ENCODE measurements at regions of chrX and their contacts with region 1.

Region 1: DNA sequence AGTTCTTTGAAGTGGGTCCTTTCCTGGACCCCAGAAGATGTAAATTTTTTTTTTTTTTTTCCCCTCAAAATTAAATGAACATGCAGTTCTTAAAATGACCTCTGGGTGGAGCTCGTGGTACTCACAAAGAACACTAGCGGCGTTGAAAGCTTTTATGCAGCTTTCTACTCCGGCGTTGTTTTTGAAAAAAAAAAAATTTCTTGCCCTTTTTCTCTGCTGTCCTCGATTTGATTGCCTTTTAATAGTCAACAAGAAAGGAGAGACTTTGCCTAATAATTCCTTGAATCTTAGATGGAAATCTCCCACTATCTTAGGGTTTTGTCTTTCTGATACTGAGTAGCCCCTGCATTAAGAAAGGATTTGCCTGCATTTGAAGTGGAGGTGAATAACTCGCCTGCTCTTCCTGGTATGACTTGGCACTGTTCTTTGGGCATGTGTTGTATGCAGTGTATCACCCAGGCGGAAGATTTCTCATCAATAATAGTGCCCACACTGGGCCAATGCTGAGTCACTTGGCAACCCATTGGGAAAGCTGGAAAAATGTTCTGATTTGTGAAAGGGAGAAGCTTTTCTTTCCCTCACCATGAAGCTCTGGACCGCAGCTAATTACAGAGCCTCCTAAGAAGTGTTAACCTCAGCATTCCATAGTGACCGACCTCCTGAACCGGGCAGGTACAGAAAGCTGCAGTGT is 104.0 kb downstream of the PHEX start:
- DNase-seq: peak; percentile 87
- H3K4me3 Mint-ChIP-seq: peak overlapping the region; percentile 49
- H3K27ac Mint-ChIP-seq: peak overlapping the region; percentile 91
- H3K4me1 Mint-ChIP-seq: peaks cover 31% of the 10 kb centered on the region
- H3K27me3 Mint-ChIP-seq: no peaks in the 10 kb centered on the region
- CTCF ChIP-seq: peak; percentile 78

Region 2: GRCh38 chrX:22122510-22122909 is 13.6 kb before region 1 on chrX:
- CTCF ChIA-PET with region 1: interaction called, 10 read pairs
- POLR2A ChIA-PET with region 1: interaction called, 23 read pairs
- intact Hi-C with region 1: no loop called
- DNase-seq: peak; percentile 97
- H3K4me3 Mint-ChIP-seq: no peak overlapping the region
- H3K27ac Mint-ChIP-seq: peak overlapping the region; percentile 60
- H3K4me1 Mint-ChIP-seq: peaks cover 18% of the 10 kb centered on the region
- H3K27me3 Mint-ChIP-seq: no peaks in the 10 kb centered on the region
- CTCF ChIP-seq: no peak

Region 3: DNA sequence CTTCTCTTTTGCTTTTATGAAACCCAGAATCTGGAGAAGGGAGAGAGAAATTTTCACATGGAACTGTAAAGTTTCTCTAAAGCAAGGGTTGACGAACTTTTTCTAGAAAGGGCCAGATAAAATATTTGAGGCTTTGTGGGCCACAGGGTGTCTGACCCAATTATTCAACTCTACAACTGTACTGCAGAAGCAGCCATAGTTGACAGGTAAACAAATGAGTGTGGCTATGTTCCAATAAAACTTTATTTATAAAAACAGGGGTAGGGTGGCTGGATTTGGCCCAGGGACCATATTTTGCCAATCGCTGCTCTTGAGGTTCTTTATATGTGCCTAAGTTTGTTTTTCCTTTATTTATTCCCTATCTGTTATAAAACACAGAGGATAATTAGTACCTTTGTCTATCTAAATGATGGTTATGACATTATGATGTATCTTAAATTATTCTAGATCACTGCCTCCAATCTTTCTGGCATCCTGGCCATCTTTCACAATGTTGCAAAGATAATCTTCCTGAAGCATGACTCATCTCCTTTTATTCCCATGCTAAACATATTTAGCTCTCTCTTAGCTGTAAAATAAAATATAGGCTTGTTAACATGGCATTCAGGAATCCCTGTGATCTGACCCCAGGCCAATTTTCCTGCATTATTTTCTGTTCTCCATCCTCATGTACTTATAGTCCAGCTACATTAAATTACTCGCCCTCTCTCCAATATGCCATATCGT is 29.8 kb after region 1 on chrX:
- CTCF ChIA-PET with region 1: interaction called, 13 read pairs
- POLR2A ChIA-PET with region 1: no interaction called
- intact Hi-C with region 1: no loop called
- DNase-seq: peak; percentile 54
- H3K4me3 Mint-ChIP-seq: no peak overlapping the region
- H3K27ac Mint-ChIP-seq: peak overlapping the region; percentile 46
- H3K4me1 Mint-ChIP-seq: peaks cover 16% of the 10 kb centered on the region
- H3K27me3 Mint-ChIP-seq: peaks cover 79% of the 10 kb centered on the region
- CTCF ChIP-seq: no peak

Region 4: DNA sequence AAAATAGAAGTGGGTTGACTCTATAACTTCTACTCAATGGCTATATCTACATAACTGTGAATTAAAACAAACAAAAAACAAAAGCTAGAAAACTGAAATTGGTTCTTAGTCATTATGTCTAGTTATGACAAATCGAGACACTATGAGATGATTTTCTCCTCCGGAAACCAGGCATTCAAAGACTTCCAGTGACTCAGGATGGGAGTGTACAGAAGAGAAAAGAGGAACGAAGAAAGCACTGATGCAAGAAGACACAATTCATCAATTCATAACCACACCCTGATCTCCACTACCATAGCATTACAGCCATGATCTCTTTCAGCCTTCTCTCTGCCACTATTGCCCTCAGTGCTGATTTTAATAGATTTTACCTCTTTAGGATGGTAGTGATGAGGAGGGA is 390.2 kb after region 1 on chrX:
- CTCF ChIA-PET with region 1: interaction called, 4 read pairs
- POLR2A ChIA-PET with region 1: no interaction called
- intact Hi-C with region 1: loop called (anchors 10 kb)
- DNase-seq: peak; percentile 76
- H3K4me3 Mint-ChIP-seq: no peak overlapping the region
- H3K27ac Mint-ChIP-seq: peak overlapping the region; percentile 63
- H3K4me1 Mint-ChIP-seq: peaks cover 8% of the 10 kb centered on the region
- H3K27me3 Mint-ChIP-seq: peaks cover 25% of the 10 kb centered on the region
- CTCF ChIP-seq: no peak

Region 5: DNA sequence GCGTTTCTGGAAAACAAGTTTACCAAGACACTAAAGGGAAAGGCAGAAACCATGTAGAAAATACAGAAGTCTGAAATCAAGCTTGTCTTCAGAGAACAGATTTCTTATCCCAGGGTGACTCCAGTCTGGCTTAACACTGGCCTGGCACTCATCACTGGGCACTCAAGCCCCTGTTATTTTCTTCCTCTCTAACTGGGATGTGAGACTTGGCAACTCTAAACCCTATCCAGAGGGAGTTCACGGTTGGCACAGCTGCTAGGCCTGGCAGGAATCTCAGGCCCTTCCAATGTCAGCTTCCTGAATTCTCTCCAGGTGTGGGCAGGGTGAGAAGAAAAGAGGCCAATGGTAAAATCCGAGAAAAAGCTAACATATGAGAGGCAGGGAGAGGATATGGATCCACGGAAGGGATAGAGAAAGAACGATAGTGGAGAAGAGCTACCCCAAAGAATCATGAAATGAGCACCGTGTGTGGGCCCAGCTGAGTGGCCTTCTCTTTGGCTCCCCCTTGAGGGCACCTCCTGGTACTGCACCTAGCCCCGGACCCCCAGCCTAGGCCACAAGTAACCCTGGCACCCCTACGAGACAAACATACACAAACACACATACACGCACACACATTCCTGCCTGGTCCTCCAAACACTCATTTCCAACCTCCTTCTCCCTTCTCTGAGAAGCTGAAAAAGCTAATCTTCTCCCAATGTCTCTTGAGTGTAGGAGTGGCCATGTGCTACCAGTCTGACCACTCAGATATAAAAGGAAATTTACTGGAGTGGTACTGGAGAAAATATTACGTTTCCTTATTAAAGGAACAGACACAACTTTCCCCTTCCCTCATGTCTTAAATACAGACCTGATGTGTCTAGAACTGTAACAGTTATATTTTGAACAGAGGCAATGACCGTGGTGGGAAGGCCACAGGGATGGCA is 1181.9 kb after region 1 on chrX:
- CTCF ChIA-PET with region 1: interaction called, 12 read pairs
- POLR2A ChIA-PET with region 1: no interaction called
- intact Hi-C with region 1: loop called (anchors 1 kb)
- DNase-seq: peak; percentile 44
- H3K4me3 Mint-ChIP-seq: no peak overlapping the region
- H3K27ac Mint-ChIP-seq: no peak overlapping the region
- H3K4me1 Mint-ChIP-seq: no peaks in the 10 kb centered on the region
- H3K27me3 Mint-ChIP-seq: peaks cover 70% of the 10 kb centered on the region
- CTCF ChIP-seq: peak; percentile 94